ENCODE measurements at regions of chr4 and their contacts with region 1.

Region 1: GRCh38 chr4:156875704-156876103 is 95.9 kb downstream of the PDGFC start:
- DNase-seq: no peak
- ATAC-seq: no peak
- H3K4me3 ChIP-seq: no peak overlapping the region
- H3K27ac ChIP-seq: no peak overlapping the region
- H3K4me1 ChIP-seq: no peaks in the 10 kb centered on the region
- H3K27me3 ChIP-seq: no peaks in the 10 kb centered on the region
- CTCF ChIP-seq: no peak
- POLR2A ChIP-seq: no peak
- RAD21 ChIP-seq: no peak

Region 2: DNA sequence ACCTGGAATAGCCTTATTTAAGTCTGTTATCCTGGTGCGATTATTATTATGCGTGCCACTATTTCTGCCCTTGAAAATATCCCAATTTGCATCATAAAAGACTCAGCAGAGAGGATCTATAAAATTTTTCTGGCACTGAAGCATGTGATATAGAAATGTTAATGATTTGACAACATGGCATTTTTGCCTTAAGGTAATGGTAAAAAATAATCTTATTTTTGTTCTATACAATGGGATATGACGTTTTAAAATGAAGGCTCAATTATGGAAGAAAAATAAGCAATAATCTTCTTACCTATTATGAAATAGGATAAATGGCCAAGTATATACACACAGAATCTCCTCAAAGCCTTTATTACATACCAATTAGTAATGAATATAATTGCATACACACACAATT is 17.6 kb before region 1 on chr4:
- CTCF ChIA-PET with region 1: no interaction called
- POLR2A ChIA-PET with region 1: no interaction called
- dilution Hi-C with region 1: no loop called
- in situ Hi-C with region 1: no loop called
- intact Hi-C with region 1: loop called (anchors 2 kb)
- DNase-seq: no peak
- ATAC-seq: no peak
- H3K4me3 ChIP-seq: no peak overlapping the region
- H3K27ac ChIP-seq: no peak overlapping the region
- H3K4me1 ChIP-seq: no peaks in the 10 kb centered on the region
- H3K27me3 ChIP-seq: no peaks in the 10 kb centered on the region
- CTCF ChIP-seq: no peak
- POLR2A ChIP-seq: no peak
- RAD21 ChIP-seq: no peak

Measured in IMR-90 (cell line).